A549 (cell line): ENCODE measurements at regions of chr17 and their contacts with region 1.

Region 1: DNA sequence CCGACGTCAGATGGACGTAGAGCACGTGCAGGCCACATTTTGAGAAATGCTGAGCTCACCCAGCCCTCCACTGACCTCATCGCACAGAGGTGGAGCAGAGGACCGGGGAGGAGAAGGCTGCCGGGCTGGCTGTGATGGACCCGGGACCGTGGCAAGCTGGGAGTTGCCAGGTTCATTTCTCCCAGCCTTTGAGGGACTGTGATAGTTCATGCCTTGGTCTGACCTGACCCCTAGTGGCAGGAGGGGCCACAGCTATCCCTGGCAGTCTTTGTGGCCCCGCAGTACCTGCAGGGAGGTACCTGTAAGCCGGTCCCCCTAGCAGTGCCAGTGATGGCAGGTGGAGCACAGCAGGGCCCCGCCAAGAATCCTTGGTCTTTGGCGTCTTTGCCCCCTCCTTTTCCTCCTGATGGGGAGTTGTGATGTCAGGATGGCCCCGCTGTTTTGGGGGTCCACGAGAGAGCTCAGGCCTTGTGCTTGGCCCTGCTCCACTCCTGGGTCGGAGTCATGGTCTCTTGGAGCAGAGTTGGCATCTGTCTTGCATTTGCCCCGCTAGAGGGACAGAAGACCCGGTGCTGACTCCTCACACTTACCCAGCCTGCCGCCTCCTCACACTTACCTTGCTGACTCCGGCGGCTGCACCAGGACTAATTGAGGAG is 50.4 kb downstream of the OR1D5 start:
- DNase-seq: peak; percentile 86 to 88
- ATAC-seq: peak; percentile 93 to 97
- H3K4me3 ChIP-seq: no peak overlapping the region
- H3K27ac ChIP-seq: peak overlapping the region; percentile 37 to 58
- H3K4me1 ChIP-seq: 0 out of 3 replicates have a peak, but pooled peaks cover 4% of the 10 kb centered on the region
- CTCF ChIP-seq: peak; percentile 95
- EP300 ChIP-seq: no peak
- POLR2A ChIP-seq: no peak
- RAD21 ChIP-seq: peak; percentile 99

Region 2: GRCh38 chr17:2814481-2815341 is 198.3 kb before region 1 on chr17:
- CTCF ChIA-PET with region 1: interaction called, 13 read pairs
- POLR2A ChIA-PET with region 1: no interaction called
- DNase-seq: no peak
- ATAC-seq: no peak
- H3K4me3 ChIP-seq: no peak overlapping the region
- H3K27ac ChIP-seq: peak overlapping the region in 1 of 2 experiments; percentile 19; a peak in 1 of 6 replicates
- H3K4me1 ChIP-seq: peaks cover 14% of the 10 kb centered on the region; the same call in 2 of the 3 replicates
- CTCF ChIP-seq: no peak
- EP300 ChIP-seq: no peak
- POLR2A ChIP-seq: no peak
- RAD21 ChIP-seq: no peak

Region 3: DNA sequence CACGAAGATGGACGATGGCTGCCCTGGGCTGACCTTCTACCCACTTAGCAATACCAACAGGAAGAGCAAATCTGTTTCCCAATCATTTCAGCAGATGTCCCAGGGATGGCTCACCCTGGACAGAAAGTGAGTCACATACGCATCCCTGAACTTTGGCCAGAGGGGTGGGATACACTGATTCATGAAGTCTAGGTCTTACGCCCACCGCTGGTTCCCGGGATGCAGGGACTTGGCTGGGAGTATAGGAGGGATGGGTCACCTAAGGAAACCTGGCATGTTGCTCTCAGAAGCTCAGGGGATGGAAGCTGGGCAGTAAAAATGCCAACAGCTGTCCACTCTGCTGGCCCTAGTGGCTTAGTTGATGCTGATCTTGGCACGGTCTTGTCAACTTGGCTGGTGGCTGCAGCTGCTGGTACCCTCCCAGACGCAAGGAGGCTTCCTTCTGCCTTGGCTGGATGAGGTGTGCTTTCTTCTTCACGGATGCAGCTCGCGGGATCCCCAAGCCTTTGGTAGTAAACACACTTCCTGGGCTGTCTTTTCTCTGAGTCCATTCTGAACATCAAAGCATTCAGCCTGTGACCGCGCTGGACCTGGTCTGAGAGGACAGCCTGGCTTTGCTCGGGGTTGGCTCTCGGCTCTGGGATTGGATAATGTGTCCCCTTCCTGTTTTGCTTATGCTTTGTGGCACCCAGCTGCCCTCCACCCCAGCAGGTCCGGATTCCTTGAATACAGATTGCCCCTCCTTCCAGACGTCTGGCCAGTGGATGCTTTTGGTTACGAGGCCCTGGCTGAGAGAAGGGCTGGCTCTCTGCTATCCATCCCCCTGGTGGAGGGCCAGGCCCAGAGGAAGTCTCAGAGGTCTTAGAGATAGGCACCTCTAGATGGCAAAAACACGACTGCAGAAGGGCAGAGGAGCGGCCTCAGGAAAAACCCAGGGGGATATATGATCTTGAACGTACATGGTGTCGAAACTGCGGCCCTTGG is 145.3 kb before region 1 on chr17:
- CTCF ChIA-PET with region 1: interaction called, 11 read pairs
- POLR2A ChIA-PET with region 1: no interaction called
- DNase-seq: peak in 1 of 2 experiments; percentile 79
- ATAC-seq: peak; percentile 76 to 86
- H3K4me3 ChIP-seq: no peak overlapping the region
- H3K27ac ChIP-seq: peak overlapping the region; percentile 34 to 74
- H3K4me1 ChIP-seq: peaks cover 17% of the 10 kb centered on the region
- CTCF ChIP-seq: no peak
- EP300 ChIP-seq: no peak
- POLR2A ChIP-seq: no peak
- RAD21 ChIP-seq: no peak

Region 4: DNA sequence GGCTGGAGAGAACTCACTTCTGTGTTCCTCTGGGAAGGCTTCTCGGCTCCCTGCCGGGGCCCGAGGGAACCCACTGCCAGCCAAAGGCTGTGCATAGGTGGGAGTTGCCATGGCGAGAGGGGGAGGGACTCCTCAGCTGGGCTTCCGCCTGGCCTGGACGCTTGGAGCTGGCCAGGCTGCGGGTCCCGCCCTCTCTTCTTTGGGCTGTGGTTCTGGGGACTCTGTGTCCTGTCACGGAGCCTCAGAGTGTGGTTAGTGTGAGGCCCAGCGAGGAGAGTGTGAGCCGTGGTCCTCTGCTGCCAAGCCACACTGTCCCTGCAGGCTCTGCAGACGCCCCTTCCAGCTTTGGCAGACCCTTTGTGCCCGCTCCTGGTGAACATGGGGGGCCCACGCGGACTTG is 72.7 kb before region 1 on chr17:
- CTCF ChIA-PET with region 1: interaction called, 18 read pairs
- POLR2A ChIA-PET with region 1: interaction called, 3 read pairs
- DNase-seq: no peak
- ATAC-seq: peak in 1 of 2 experiments; percentile 21; a peak in 2 of 6 replicates
- H3K4me3 ChIP-seq: no peak overlapping the region
- H3K27ac ChIP-seq: peak overlapping the region; percentile 12 to 45; a peak in 4 of 6 replicates
- H3K4me1 ChIP-seq: peaks cover 12% of the 10 kb centered on the region
- CTCF ChIP-seq: no peak
- EP300 ChIP-seq: no peak
- POLR2A ChIP-seq: no peak
- RAD21 ChIP-seq: no peak

Region 5: GRCh38 chr17:2995886-2996855 is 16.9 kb before region 1 on chr17:
- CTCF ChIA-PET with region 1: interaction called, 20 read pairs
- POLR2A ChIA-PET with region 1: interaction called, 3 read pairs
- DNase-seq: no peak
- ATAC-seq: no peak
- H3K4me3 ChIP-seq: no peak overlapping the region
- H3K27ac ChIP-seq: peak overlapping the region; percentile 36 to 71; a peak in 4 of 6 replicates
- H3K4me1 ChIP-seq: peaks cover 22% of the 10 kb centered on the region
- CTCF ChIP-seq: no peak
- EP300 ChIP-seq: no peak
- POLR2A ChIP-seq: no peak
- RAD21 ChIP-seq: no peak